ENCODE measurements at regions of chr19 and their contacts with region 1.

Region 1: DNA sequence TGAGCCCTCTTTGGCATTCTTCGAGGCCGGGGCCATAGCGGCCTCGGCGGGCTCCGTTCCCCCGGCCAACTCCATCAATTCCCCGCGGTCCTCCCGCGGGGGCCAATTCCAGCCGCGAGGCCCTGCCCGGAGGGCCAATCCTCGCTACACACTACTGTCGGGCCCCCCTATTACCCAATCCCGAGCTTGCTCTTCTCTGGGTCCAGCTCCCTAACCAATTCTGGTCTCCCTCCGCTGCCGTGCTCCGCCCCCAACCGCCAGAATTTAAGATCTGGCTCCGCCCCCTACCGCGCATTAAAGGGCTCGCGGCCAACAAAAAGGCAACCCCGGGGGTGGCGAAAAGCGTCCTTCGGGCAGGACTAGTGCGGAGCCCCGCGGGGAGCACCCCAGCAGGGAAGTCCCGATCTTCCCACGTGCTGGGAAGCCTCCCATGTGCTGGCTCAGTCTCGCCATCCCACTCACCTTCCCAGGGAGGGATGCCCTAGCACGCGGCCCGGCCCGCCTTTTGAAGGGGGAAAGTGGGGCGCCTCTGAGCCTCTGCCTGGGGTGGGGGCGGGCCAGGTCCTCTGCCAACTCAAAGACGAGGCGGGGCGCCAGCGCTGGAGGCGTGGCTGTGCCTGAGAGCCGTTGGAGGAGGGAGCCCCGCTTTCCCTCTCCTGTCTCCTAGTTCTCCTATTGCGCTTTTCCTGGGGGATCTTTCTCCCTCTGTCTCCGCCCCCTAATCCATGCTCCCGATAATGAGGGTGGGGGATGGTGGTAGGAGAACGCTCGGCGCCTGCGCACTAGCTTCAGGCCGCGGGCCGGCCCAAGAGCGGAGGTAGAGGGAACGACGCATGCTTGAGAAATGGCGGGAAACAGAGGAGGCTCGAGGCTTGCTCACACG is 3.5 kb downstream of the LIPE start:
- DNase-seq: peak; percentile 96
- H3K27ac ChIP-seq: peak overlapping the region; percentile 79
- CTCF ChIP-seq: no peak

Region 2: DNA sequence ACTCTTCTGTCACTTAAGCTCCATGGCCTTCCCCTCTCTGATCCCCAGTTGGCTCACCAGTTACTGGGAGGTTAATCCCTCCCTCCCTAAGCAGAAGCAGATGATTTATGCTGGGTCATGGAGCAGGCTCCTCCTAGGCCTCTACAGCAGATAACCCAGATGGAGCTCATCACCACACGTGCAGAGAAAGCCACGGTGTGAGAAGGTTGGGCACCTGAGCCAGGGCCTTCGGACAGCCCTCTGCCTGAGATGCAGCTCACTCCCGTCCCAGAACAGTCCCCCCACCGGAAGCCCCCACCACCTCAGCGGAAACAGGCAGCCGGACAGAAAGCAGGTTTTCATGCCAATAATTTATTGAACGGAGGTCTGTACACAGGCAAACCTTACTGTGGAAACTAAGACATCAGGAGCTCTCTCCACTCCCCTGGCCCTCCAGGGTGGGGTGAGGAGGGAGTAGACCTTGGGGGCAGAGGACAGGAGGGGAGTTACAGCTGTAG is 193.8 kb before region 1 on chr19:
- CTCF ChIA-PET with region 1: no interaction called
- POLR2A ChIA-PET with region 1: no interaction called
- DNase-seq: no peak
- H3K27ac ChIP-seq: peak overlapping the region; percentile 64
- CTCF ChIP-seq: no peak

Region 3: GRCh38 chr19:42440357-42441048 is 16.8 kb after region 1 on chr19:
- CTCF ChIA-PET with region 1: interaction called, 12 read pairs
- POLR2A ChIA-PET with region 1: no interaction called
- DNase-seq: peak; percentile 55
- H3K27ac ChIP-seq: no peak overlapping the region
- CTCF ChIP-seq: peak; percentile 83